Gastrocnemius medialis (tissue), 4 donors: ENCODE measurements at regions of chr18 and their contacts with region 1.

Region 1: DNA sequence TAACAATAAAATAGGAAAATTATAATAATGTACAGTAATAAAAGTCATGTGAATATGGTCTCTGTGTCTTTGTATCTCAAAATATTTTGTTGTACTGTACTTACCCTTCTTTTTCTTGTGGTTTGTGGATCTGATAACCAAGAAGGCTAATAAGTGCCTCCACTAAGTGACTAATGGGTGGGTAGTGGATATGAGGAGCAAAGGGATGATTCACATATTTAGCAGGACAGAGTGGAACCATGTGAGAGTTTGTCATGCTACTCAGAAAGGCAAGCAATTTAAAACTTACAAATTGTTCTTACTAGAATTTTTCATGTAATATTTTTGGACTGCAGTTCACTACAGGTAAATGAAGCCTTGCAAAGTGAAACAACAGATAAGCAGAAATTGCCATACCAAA is 1241.2 kb upstream of the CDH2 start:
- DNase-seq: no peak
- ATAC-seq: no peak
- H3K4me3 ChIP-seq: no peak overlapping the region
- H3K27ac ChIP-seq: no peak overlapping the region
- H3K4me1 ChIP-seq: no peaks in the 10 kb centered on the region
- H3K27me3 ChIP-seq: no peaks in the 10 kb centered on the region
- CTCF ChIP-seq: no peak
- POLR2A ChIP-seq: no peak

Region 2: GRCh38 chr18:29501952-29502351 is 83.8 kb after region 1 on chr18:
- in situ Hi-C with region 1: loop called in 1 of 4 experiments (anchors 25 kb)
- intact Hi-C with region 1: no loop called
- DNase-seq: no peak
- ATAC-seq: no peak
- H3K4me3 ChIP-seq: no peak overlapping the region
- H3K27ac ChIP-seq: no peak overlapping the region
- H3K4me1 ChIP-seq: no peaks in the 10 kb centered on the region
- H3K27me3 ChIP-seq: no peaks in the 10 kb centered on the region
- CTCF ChIP-seq: no peak
- POLR2A ChIP-seq: no peak